Activated T-helper 1 cell treated with anti-CD3 and anti-CD28 coated beads, Interleukin-12 subunit alpha, Interleukin-12 subunit beta, Interleukin-2, Interleukin-4 antibody, amounts not matched to agents 30 ng/mL and 10 ng/mL and 1 ng/mL, durations not matched to agents 14 hours and 24 hours and 36 hours (primary cell): ENCODE measurements at regions of chr14 and their contacts with region 1.

Region 1: DNA sequence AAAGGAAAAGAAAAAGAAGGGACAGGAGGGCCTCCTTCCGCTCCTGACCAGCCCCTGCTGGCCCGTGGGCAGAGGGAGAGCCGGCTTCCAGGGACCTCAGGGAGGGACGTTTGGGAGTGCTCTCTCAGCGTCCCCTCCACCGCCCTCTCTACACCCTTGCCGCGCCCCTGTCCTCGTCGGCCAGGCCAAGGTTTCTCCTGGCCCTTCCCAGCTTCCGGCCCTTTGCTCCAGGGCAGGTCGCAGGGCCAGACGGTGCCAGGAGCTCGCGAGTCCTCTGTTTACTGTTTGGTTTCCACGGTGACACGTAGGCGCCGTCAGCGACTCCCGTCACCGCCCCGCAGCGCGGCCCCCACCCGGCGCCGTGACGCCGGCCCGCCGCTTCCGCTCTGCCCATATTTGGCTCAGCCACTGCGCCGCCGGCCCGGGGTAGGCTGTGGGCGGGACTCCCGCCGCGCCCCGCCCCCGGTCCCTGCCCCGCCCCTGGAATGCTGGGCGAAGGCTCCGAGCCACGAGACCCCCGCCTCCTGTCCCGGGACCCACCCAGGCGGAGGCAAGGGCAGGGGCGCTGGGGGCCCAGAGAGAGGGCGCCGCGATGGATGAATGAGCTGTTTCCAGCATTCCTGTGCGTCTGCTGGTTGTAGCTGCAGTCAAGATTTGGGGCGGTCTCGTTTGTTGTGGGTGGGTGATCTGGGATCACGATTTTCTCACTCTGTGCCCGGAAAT is 15.5 kb downstream of the FOS start:
- DNase-seq: peak; percentile 92
- H3K4me3 Mint-ChIP-seq: peak overlapping the region; percentile 72
- H3K27ac Mint-ChIP-seq: peak overlapping the region; percentile 95
- H3K4me1 Mint-ChIP-seq: peaks cover 22% of the 10 kb centered on the region
- H3K27me3 Mint-ChIP-seq: peaks cover 26% of the 10 kb centered on the region

Region 2: DNA sequence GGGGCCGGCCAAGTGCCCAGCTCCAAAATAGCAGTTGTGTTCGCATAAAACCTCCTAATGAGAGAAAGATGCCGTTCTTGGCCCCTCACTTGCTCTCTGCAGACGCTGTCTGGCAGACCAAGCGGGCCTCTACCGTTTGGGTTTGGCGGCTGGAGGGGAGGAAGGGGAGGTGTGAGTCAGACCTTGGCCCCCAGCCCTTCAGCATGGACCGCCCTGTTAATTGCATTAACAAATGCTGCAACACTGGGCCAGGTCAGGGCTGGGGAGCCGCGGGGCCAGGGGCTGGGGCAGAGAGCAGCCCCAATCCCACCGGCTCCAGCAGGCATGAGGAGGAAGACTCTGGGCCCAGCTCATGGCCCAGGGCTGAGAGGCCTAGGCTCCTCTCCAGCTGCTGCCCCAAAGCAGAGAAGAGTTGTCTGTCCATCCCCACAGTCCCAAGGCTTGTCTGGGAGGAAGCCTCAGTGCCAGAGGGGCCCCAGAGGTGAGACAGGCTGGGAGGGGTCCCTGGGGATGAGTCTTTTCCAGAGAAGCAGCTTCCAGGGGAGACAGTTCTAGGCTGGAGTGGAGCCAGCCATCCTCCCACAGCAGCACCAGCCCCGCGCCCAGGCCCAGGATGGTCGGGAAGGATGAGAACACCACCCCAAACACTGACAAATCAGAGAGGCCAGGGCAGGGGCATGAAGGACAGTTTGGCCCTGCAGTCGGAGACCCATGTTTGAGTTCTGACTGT is 698.9 kb before region 1 on chr14:
- intact Hi-C with region 1: no loop called
- DNase-seq: no peak
- H3K4me3 Mint-ChIP-seq: no peak overlapping the region
- H3K27ac Mint-ChIP-seq: no peak overlapping the region
- H3K4me1 Mint-ChIP-seq: no peaks in the 10 kb centered on the region
- H3K27me3 Mint-ChIP-seq: peaks cover 3% of the 10 kb centered on the region

Region 3: GRCh38 chr14:75126679-75127473 is 167.2 kb before region 1 on chr14 and contains the start of gene NEK9:
- intact Hi-C with region 1: loop called (anchors 1 kb)
- DNase-seq: peak; percentile 86
- H3K4me3 Mint-ChIP-seq: peak within 1 kb of the TSS; percentile 93
- H3K27ac Mint-ChIP-seq: peak within 1 kb of the TSS; percentile 97
- H3K4me1 Mint-ChIP-seq: peaks cover 39% of the 10 kb centered on the region
- H3K27me3 Mint-ChIP-seq: no peaks in the 10 kb centered on the region
- total RNA-seq, gene NEK9: 76.8 and 77.0 TPM in 2 replicates

Region 4: GRCh38 chr14:75132382-75133086 is 161.5 kb before region 1 on chr14:
- intact Hi-C with region 1: loop called (anchors 1 kb)
- DNase-seq: peak; percentile 47
- H3K4me3 Mint-ChIP-seq: no peak overlapping the region
- H3K27ac Mint-ChIP-seq: peak overlapping the region; percentile 4
- H3K4me1 Mint-ChIP-seq: peaks cover 20% of the 10 kb centered on the region
- H3K27me3 Mint-ChIP-seq: no peaks in the 10 kb centered on the region

Region 5: DNA sequence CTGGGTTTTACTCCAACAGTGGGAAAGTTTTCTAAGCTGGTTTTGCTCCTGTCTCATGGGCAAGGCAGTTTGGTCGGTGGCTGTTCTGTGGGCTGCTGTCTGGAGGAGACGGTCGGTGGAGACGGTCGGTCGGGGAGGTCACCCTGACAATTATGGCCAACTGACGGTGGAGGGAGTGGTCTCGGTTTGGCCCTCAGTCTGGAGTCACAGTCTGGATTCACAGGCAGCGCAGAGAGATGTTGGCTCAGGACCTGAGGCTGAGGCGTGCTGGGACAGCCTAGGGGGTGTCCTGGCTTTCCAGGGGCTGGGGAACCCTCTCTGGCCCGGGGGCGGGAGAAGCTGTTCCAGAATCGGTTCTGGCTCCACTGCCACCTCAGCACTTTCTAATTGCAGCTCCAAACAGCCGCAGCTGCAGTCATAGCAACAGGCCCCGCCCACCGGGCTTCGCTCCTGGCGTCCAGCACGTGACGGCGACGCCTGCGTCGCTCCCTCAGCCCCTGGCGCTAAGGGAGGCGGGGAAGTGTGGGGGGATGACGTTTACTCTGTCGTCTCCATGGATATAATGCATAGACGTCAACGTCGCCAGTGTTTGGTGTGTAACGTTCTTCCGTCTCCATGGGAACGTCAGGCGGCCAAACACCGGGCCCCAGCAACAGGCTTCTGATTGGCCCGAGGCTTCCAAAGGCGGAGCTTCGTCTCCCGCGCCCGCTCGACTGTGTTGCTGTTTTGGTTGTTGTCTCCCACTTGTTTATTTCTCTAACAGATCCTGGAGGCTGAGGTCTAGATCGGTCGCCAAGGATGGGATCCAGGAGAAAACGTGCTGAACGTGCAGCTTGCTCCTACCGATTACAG is 35.2 kb before region 1 on chr14:
- intact Hi-C with region 1: loop called (anchors 1 kb)
- DNase-seq: peak; percentile 99
- H3K4me3 Mint-ChIP-seq: peak overlapping the region; percentile 85
- H3K27ac Mint-ChIP-seq: peak overlapping the region; percentile 100
- H3K4me1 Mint-ChIP-seq: peaks cover 23% of the 10 kb centered on the region
- H3K27me3 Mint-ChIP-seq: peaks cover 52% of the 10 kb centered on the region

Region 6: DNA sequence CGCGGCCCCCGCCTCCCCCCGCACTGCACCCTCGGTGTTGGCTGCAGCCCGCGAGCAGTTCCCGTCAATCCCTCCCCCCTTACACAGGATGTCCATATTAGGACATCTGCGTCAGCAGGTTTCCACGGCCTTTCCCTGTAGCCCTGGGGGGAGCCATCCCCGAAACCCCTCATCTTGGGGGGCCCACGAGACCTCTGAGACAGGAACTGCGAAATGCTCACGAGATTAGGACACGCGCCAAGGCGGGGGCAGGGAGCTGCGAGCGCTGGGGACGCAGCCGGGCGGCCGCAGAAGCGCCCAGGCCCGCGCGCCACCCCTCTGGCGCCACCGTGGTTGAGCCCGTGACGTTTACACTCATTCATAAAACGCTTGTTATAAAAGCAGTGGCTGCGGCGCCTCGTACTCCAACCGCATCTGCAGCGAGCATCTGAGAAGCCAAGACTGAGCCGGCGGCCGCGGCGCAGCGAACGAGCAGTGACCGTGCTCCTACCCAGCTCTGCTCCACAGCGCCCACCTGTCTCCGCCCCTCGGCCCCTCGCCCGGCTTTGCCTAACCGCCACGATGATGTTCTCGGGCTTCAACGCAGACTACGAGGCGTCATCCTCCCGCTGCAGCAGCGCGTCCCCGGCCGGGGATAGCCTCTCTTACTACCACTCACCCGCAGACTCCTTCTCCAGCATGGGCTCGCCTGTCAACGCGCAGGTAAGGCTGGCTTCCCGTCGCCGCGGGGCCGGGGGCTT is 15.5 kb before region 1 on chr14 and contains the start of gene FOS:
- intact Hi-C with region 1: loop called (anchors 1 kb)
- DNase-seq: peak; percentile 87
- H3K4me3 Mint-ChIP-seq: peak within 1 kb of the TSS; percentile 90
- H3K27ac Mint-ChIP-seq: peak within 1 kb of the TSS; percentile 99
- H3K4me1 Mint-ChIP-seq: peaks cover 52% of the 10 kb centered on the region
- H3K27me3 Mint-ChIP-seq: peaks cover 55% of the 10 kb centered on the region
- total RNA-seq, gene FOS: 40.9 and 41.9 TPM in 2 replicates